OCI-LY7 (cell line): ENCODE measurements at regions of chr10 and their contacts with region 1.

Region 1: DNA sequence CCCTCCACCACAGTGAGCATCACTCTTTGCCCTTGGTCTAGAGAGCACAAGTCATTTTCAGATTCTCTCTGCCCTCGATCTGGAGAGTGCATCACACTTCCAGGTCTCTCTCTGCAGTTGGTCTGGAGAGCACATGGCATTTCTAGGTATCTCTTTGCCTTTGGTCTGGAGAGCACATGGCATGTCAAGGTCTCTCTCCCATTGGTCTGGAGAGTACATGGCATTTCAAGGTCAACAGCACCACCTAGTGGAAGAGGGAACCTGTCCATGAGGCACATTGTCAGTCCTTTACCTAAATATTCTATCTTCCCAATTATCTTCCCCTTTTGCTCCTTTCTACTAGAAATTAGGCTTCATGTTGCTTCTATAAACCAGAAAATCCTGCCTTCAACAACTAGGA is 1139.4 kb downstream of the XPNPEP1 start:
- DNase-seq: peak; percentile 65
- H3K4me3 ChIP-seq: no peak overlapping the region
- H3K27ac ChIP-seq: no peak overlapping the region
- H3K4me1 ChIP-seq: no peaks in the 10 kb centered on the region
- CTCF ChIP-seq: peak; percentile 83

Region 2: DNA sequence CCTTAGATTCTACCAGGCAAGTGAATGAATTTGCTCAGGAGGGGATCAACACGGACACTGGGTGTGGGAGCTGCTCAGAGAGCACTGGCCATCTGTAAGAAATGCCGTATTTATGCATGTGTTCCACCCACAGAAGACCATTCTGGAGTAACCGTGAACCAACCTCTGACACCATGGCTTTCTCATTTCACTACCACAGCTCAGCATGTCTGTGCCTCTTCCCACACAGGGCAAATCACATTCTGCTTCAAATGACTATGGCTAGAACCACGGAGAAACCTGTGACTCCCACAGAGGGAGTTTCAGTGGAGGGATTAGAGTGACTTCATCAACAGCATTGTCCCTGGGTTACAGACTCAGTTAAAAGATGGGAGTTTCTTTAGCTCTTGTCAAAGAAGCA is 246.0 kb after region 1 on chr10:
- CTCF ChIA-PET with region 1: no interaction called
- POLR2A ChIA-PET with region 1: no interaction called
- intact Hi-C with region 1: loop called (anchors 10 kb)
- DNase-seq: no peak
- H3K4me3 ChIP-seq: no peak overlapping the region
- H3K27ac ChIP-seq: no peak overlapping the region
- H3K4me1 ChIP-seq: no peaks in the 10 kb centered on the region
- CTCF ChIP-seq: no peak